Activated CD4-positive, alpha-beta T cell treated with anti-CD3 and anti-CD28 coated beads for 36 hours (primary cell): ENCODE measurements at regions of chr9 and their contacts with region 1.

Region 1: GRCh38 chr9:22008736-22009562 is at the start of gene CDKN2B:
- DNase-seq: peak; percentile 82
- ATAC-seq: peak; percentile 87
- H3K4me3 Mint-ChIP-seq: peak within 1 kb of the TSS; percentile 76
- H3K27ac Mint-ChIP-seq: no peak within 1 kb of the TSS
- H3K4me1 Mint-ChIP-seq: peaks cover 20% of the 10 kb centered on the region
- H3K27me3 Mint-ChIP-seq: peaks cover 56% of the 10 kb centered on the region
- total RNA-seq, gene CDKN2B: not detected

Region 2: GRCh38 chr9:21974548-21975409 is 34.2 kb before region 1 on chr9:
- CTCF ChIA-PET with region 1: interaction called, 27 read pairs
- POLR2A ChIA-PET with region 1: no interaction called
- intact Hi-C with region 1: loop called in 1 of 2 experiments (anchors 1 kb)
- DNase-seq: peak; percentile 70
- ATAC-seq: peak; percentile 68
- H3K4me3 Mint-ChIP-seq: peak overlapping the region; percentile 62
- H3K27ac Mint-ChIP-seq: no peak overlapping the region
- H3K4me1 Mint-ChIP-seq: peaks cover 23% of the 10 kb centered on the region
- H3K27me3 Mint-ChIP-seq: peaks cover 78% of the 10 kb centered on the region

Region 3: DNA sequence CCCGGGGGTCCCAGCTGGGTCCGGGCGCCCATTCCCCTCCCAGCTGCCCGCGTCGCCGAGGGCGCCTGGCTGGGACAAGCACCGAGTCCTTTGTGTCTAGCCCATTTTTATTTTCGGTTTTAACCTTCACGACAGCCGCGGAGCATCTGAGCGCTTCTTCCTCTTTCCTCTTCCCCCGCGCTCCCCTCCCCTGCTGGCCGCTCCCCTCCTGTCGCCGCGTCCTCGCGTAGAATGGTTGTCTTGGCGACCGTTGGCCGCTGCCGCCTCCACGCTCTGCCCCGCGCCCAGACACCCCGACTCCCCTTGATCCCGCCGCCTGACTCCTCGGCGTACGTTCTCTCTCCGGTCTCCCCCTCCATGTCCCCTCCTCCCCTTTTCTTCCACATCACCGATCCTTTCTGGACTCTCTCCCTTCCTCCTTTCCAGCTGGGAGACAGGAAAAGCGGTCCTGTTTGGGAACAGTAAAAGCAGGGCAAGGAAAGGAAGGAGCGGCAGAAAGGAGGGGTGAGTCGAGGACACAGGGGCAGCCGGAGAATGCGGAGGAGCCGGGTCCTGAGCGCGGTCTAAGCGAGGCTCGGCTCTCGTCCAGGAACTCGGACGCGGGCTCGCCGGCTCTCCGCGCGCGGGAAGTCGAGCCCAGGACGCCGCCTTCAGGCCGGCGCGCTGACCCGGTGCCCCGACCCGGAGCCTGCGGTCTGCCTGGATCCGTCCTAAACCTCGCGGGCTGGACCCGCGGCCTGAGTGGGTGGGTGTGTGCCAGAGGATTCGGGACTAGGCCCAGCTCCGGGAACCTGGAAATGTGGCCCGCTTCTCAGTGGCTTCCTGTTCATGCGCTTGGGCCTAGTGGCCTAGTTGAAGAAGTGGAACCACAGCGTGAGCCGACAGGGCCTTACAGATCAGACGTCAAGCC is 13.5 kb before region 1 on chr9:
- CTCF ChIA-PET with region 1: interaction called, 31 read pairs
- POLR2A ChIA-PET with region 1: interaction called, 3 read pairs
- intact Hi-C with region 1: loop called (anchors 1 kb)
- DNase-seq: peak; percentile 82
- ATAC-seq: peak; percentile 75
- H3K4me3 Mint-ChIP-seq: peak overlapping the region; percentile 90
- H3K27ac Mint-ChIP-seq: peak overlapping the region; percentile 37
- H3K4me1 Mint-ChIP-seq: peaks cover 8% of the 10 kb centered on the region
- H3K27me3 Mint-ChIP-seq: peaks cover 37% of the 10 kb centered on the region

Region 4: GRCh38 chr9:22052376-22052945 is 43.5 kb after region 1 on chr9:
- CTCF ChIA-PET with region 1: interaction called, 29 read pairs
- POLR2A ChIA-PET with region 1: no interaction called
- intact Hi-C with region 1: no loop called
- DNase-seq: peak; percentile 57
- ATAC-seq: peak; percentile 96
- H3K4me3 Mint-ChIP-seq: no peak overlapping the region
- H3K27ac Mint-ChIP-seq: no peak overlapping the region
- H3K4me1 Mint-ChIP-seq: peaks cover 30% of the 10 kb centered on the region
- H3K27me3 Mint-ChIP-seq: peaks cover 13% of the 10 kb centered on the region